Activated T-helper 1 cell treated with anti-CD3 and anti-CD28 coated beads, Interleukin-12 subunit alpha, Interleukin-12 subunit beta, Interleukin-2, Interleukin-4 antibody, amounts not matched to agents 30 ng/mL and 10 ng/mL and 1 ng/mL, durations not matched to agents 14 hours and 24 hours and 36 hours (primary cell): ENCODE measurements at regions of chr5 and their contacts with region 1.

Region 1: DNA sequence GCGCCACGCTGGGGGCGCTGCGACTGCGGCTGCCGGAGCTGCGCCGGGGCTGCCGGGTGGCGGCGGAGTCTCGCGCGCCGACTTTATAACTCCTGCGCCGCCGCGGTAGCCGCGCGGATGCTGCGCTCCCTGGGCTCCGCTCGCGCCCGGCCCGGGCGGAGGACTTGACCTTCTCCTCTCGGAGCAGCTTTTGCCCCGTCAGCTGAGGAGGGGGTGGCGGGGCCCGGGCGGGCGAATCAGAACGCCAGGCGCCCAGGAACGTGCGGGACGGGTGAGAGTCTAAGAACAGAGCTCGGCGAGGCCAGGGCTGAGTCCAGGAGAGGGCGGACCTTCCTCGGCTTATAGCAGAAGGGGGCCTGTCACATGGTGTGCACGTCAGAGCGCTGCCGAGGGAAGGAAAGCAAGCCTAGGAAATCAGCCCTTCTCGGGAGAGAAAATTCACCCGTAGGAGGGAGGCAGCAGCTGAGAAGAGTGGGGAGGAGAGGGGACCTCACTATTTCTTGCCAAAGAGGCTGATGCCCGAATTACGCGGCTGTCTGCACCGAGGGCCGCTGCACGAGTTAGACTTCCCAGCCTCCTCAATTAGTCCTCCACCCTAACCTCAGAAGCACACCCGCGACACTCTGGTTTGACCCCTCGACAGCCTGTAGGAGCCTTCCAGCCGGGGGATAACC is at the start of gene FOXD1:
- DNase-seq: no peak
- H3K4me3 Mint-ChIP-seq: peak within 1 kb of the TSS; percentile 75
- H3K27ac Mint-ChIP-seq: peak within 1 kb of the TSS; percentile 73
- H3K4me1 Mint-ChIP-seq: peaks cover 15% of the 10 kb centered on the region
- H3K27me3 Mint-ChIP-seq: peaks cover 76% of the 10 kb centered on the region
- total RNA-seq, gene FOXD1: 0.13 and 0.15 TPM in 2 replicates

Region 2: DNA sequence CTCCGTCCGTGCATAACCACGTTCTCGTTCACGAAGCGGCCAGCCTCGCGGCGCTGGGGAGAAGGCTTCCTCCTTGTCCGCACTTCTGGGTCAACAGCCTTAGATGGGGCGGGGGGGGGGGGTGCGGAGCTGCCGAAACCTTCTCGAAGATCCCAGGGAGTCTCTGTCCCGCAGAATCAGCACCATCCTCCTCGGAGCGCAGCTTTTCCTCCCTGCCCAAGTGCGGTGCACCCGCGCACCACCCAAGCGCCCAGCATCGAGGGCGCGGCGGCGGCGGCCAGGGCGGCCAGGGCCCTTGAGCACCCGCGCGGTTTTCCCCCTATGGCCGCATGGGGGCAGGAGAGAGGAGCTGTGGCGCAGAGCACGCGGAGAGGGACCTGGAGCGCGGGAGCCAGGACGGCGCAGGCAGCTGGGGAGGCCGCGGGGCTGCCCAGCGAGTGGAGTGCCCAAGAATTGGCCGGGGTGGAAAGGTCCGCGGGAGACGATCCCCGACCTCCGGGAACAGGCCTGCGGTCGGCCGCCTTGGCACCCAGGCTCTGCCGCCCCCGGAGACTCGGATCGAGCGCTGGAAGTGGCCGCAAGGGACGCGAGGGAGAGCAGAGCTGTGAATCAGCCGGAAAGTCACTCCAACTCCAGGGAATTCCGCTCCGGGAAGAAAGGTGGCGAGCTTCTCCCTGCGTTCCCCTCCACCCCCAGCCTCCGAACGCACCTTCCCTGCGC is 232.5 kb before region 1 on chr5:
- intact Hi-C with region 1: loop called (anchors 1 kb)
- DNase-seq: peak; percentile 41
- H3K4me3 Mint-ChIP-seq: no peak overlapping the region
- H3K27ac Mint-ChIP-seq: no peak overlapping the region
- H3K4me1 Mint-ChIP-seq: peaks cover 6% of the 10 kb centered on the region
- H3K27me3 Mint-ChIP-seq: peaks cover 65% of the 10 kb centered on the region

Region 3: GRCh38 chr5:73298772-73299630 is 149.6 kb before region 1 on chr5:
- intact Hi-C with region 1: loop called (anchors 1 kb)
- DNase-seq: no peak
- H3K4me3 Mint-ChIP-seq: no peak overlapping the region
- H3K27ac Mint-ChIP-seq: peak overlapping the region; percentile 42
- H3K4me1 Mint-ChIP-seq: no peaks in the 10 kb centered on the region
- H3K27me3 Mint-ChIP-seq: peaks cover 81% of the 10 kb centered on the region

Region 4: DNA sequence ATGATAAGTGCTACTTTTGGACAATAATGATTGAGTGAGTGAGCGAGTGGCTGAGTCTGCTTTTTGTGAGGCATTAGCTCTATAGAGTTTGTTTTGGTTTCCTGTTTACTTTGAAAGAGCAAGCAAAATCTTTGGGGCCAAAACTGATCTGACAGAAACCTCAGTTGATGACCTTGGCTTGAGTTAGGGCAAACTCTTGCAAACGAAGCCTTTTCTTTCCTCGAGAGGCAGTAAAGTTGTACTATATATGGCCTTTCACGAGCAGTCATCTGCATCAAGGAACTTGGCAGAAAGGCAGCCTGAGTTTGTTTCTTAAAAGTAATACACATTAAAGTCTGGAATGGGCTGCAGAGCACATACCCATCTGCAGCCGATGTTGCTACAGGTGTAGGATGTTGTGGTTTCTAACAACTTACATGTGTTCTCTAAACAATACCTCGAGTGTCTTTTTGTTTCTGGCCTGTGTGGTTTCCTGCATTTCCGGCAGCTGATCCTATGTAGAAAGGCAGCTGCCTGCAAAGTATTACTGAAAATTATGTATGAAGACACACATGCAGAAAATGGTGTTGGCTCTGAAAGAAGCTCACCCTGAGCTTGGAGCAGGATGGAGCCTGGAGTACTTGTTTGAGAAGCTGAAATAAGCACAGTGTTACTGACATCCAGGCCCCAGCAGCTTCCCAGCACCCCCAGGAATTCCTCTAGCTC is 60.8 kb before region 1 on chr5:
- intact Hi-C with region 1: loop called (anchors 2 kb)
- DNase-seq: peak; percentile 57
- H3K4me3 Mint-ChIP-seq: peak overlapping the region; percentile 27
- H3K27ac Mint-ChIP-seq: no peak overlapping the region
- H3K4me1 Mint-ChIP-seq: peaks cover 27% of the 10 kb centered on the region
- H3K27me3 Mint-ChIP-seq: peaks cover 61% of the 10 kb centered on the region

Region 5: DNA sequence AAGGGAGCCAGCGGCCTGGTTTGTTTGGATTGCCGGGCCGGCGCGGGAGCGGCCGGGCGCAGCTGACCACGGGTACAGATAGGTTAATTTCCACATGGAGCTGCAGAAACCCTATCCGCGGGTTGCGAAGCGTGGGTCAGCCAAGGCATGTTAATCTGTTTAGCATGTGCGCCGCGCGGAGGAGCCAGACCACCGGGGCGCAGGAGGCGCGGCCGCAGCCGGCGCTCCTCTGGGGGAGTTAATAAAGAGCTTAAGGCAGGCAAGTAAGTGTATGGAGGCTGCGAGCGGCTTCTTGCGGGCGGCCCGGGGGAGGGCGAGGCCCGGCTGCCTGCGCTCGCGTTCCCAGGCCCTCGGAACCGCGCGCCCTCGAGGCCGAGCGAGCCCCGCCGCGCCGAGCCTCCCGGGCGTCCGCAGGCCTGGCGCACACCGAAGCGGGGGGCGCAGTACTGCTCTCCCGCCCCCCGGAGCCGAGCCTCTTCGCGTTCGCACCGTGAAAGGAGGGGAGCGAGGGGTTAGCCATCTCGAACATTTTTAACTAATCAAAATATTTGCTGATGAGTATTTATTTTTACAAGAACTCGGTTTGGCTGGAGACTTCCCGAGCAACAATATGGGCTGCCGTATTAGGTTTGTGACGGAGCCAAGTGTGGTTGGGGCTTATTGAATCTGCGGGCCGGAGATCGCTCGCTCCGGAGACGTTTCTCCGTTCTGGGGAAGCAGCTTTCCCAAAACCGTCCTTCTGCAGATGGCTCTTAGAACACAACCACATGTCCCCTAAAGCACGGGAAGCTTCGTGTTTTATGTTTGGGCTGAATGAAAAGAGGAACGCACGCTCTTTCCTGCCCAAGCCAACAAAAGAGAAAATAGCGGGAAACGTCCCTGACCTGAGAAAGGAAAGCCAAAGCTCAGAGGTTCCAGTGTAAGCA is 28.9 kb before region 1 on chr5:
- intact Hi-C with region 1: loop called (anchors 1 kb)
- DNase-seq: no peak
- H3K4me3 Mint-ChIP-seq: no peak overlapping the region
- H3K27ac Mint-ChIP-seq: no peak overlapping the region
- H3K4me1 Mint-ChIP-seq: no peaks in the 10 kb centered on the region
- H3K27me3 Mint-ChIP-seq: peaks cover 88% of the 10 kb centered on the region

Region 6: GRCh38 chr5:73437101-73437776 is 11.4 kb before region 1 on chr5:
- intact Hi-C with region 1: loop called (anchors 1 kb)
- DNase-seq: no peak
- H3K4me3 Mint-ChIP-seq: no peak overlapping the region
- H3K27ac Mint-ChIP-seq: no peak overlapping the region
- H3K4me1 Mint-ChIP-seq: peaks cover 6% of the 10 kb centered on the region
- H3K27me3 Mint-ChIP-seq: peaks cover 83% of the 10 kb centered on the region